A549 (cell line): ENCODE measurements at regions of chr15 and their contacts with region 1.

Region 1: GRCh38 chr15:63497642-63498467 is 6.5 kb upstream of the USP3 start:
- DNase-seq: peak in 1 of 2 experiments; percentile 37
- ATAC-seq: no peak
- H3K4me3 ChIP-seq: no peak overlapping the region
- H3K27ac ChIP-seq: peak overlapping the region; percentile 77 to 82
- H3K4me1 ChIP-seq: peaks cover 89% of the 10 kb centered on the region
- CTCF ChIP-seq: no peak
- EP300 ChIP-seq: no peak
- POLR2A ChIP-seq: no peak
- RAD21 ChIP-seq: no peak

Region 2: GRCh38 chr15:63374686-63375520 is 123.0 kb before region 1 on chr15:
- CTCF ChIA-PET with region 1: no interaction called
- POLR2A ChIA-PET with region 1: no interaction called
- DNase-seq: peak in 1 of 2 experiments; percentile 63
- ATAC-seq: peak; percentile 31 to 53; a peak in 5 of 6 replicates
- H3K4me3 ChIP-seq: 0 out of 3 replicates have a peak overlapping the region, but pooled peaks have one; percentile 2
- H3K27ac ChIP-seq: peak overlapping the region; percentile 88 to 93
- H3K4me1 ChIP-seq: peaks cover 100% of the 10 kb centered on the region
- CTCF ChIP-seq: no peak
- EP300 ChIP-seq: no peak
- POLR2A ChIP-seq: no peak
- RAD21 ChIP-seq: no peak; a peak in 1 of 5 replicates

Region 3: GRCh38 chr15:63481105-63481810 is 16.6 kb before region 1 on chr15:
- CTCF ChIA-PET with region 1: interaction called, 47 read pairs
- POLR2A ChIA-PET with region 1: interaction called, 12 read pairs
- DNase-seq: peak; percentile 54 to 57
- ATAC-seq: peak; percentile 25 to 49; a peak in 5 of 6 replicates
- H3K4me3 ChIP-seq: no peak overlapping the region
- H3K27ac ChIP-seq: peak overlapping the region; percentile 50 to 70
- H3K4me1 ChIP-seq: peaks cover 86% of the 10 kb centered on the region
- CTCF ChIP-seq: no peak
- EP300 ChIP-seq: no peak
- POLR2A ChIP-seq: no peak
- RAD21 ChIP-seq: no peak